ENCODE measurements at regions of chr4 and their contacts with region 1.

Region 1: GRCh38 chr4:74370912-74371311 is 6.0 kb downstream of the EREG start:
- DNase-seq: no peak
- ATAC-seq: peak in 1 of 4 donors; percentile 47
- H3K4me3 ChIP-seq: no peak overlapping the region
- H3K27ac ChIP-seq: no peak overlapping the region
- H3K4me1 ChIP-seq: peaks cover under 1% of the 10 kb centered on the region
- H3K27me3 ChIP-seq: peaks cover 0 to 2% (median 0%) of the 10 kb centered on the region in 3 donors
- CTCF ChIP-seq: peak; percentile 32

Region 2: DNA sequence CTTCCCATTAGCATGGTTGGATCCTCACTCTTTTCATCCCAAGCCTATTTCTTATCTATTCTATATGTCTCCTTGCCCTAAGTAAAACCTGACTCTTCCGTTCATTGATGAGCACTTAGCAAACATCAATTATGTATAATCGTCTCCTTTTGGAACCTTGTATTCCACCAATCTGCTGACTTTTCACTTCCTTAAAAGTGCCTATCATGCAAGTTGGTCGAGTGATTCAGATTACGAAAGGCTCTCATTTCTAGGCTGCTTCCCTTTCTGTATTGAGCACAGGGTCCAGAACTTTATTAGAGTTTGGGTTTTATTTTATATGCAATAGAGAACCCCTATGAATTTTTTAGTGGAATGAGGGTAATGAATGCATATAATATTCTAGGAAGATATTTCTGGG is 993.9 kb before region 1 on chr4:
- intact Hi-C with region 1: no loop called
- DNase-seq: no peak
- ATAC-seq: no peak
- H3K4me3 ChIP-seq: no peak overlapping the region
- H3K27ac ChIP-seq: no peak overlapping the region
- H3K4me1 ChIP-seq: no peaks in the 10 kb centered on the region
- H3K27me3 ChIP-seq: no peaks in the 10 kb centered on the region
- CTCF ChIP-seq: no peak

Region 3: DNA sequence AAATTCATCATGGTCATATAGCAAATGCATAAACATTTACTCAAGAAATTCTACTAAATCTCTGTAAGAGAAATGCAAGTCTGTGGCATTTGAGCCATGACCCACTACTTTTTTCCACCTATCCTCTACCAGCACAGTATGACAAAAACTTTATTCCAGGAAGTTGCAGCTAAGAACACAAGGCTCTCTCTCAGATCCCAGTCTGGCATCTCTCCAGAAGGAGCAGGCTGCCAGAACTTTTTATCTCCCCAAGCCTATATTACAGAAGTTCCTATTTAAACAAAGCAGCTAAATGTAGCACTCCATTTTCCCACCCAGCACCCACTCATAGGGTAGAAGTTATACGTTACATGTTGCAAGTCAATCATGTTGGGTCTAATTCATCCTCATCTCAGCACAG is 111.9 kb before region 1 on chr4:
- intact Hi-C with region 1: no loop called
- DNase-seq: no peak
- ATAC-seq: no peak
- H3K4me3 ChIP-seq: no peak overlapping the region
- H3K27ac ChIP-seq: no peak overlapping the region
- H3K4me1 ChIP-seq: peaks cover 7% of the 10 kb centered on the region
- H3K27me3 ChIP-seq: no peaks in the 10 kb centered on the region
- CTCF ChIP-seq: no peak

Region 4: GRCh38 chr4:74475091-74475800 is 104.3 kb after region 1 on chr4:
- intact Hi-C with region 1: no loop called
- DNase-seq: no peak
- ATAC-seq: no peak
- H3K4me3 ChIP-seq: no peak overlapping the region
- H3K27ac ChIP-seq: no peak overlapping the region
- H3K4me1 ChIP-seq: no peaks in the 10 kb centered on the region
- H3K27me3 ChIP-seq: peaks cover 0 to 3% (median 0%) of the 10 kb centered on the region in 3 donors
- CTCF ChIP-seq: no peak

Region 5: DNA sequence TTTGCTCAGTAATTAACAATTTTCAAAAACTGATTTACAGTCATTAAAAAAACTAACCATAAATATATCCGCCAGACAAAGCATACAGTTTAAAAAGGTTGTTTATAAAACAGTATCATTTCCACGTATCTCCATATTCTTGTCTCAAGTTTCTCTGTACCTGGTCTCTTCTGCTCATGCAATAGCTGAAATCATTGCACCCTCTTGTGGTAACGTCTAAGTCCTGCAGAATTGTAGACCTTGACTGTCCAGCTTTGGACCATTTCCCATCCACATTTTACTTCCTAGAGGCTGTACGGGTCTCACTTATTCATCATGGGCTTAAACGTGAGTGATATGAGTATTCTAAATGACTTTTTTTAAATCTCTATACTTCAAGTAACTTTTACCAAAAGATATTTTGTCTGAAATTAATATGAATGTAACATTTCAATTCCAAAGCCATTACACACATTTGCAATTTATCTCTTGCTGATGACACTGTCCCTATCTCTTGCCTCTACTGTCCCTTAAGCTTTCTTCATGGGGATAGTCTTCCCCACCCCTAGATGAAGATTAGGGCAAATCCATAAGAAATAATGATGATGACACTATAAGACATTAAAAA is 304.9 kb after region 1 on chr4:
- intact Hi-C with region 1: loop called (anchors 5 to 10 kb)
- DNase-seq: no peak
- ATAC-seq: no peak
- H3K4me3 ChIP-seq: no peak overlapping the region
- H3K27ac ChIP-seq: no peak overlapping the region
- H3K4me1 ChIP-seq: no peaks in the 10 kb centered on the region
- H3K27me3 ChIP-seq: no peaks in the 10 kb centered on the region
- CTCF ChIP-seq: peak; percentile 39

Region 6: DNA sequence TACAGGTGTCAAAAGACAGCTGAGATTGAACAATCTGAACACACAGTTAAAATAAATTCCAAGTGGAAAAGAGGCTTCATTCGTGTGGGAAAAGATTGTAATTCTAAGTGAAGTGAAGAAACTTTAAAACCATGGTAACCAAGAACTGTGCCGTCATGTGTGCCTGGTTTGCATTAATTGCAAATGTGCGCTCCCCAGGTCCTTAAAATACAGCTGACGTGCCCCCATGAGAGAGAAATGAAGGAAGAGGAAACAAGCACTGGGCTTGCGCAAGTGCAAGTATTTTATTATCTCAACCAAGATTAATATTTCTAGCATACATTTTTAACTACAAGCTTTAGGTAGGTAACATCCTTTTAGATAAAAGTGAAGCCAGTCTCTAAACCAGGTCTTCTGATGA is 654.5 kb after region 1 on chr4:
- intact Hi-C with region 1: no loop called
- DNase-seq: no peak
- ATAC-seq: no peak
- H3K4me3 ChIP-seq: no peak overlapping the region
- H3K27ac ChIP-seq: no peak overlapping the region
- H3K4me1 ChIP-seq: no peaks in the 10 kb centered on the region
- H3K27me3 ChIP-seq: no peaks in the 10 kb centered on the region
- CTCF ChIP-seq: no peak

Measured in psoas muscle (tissue), 8 donors.